Sciatic nerve (tissue), 2 donors: ENCODE measurements at regions of chr19 and their contacts with region 1.

Region 1: GRCh38 chr19:41206926-41207750 is 11.9 kb upstream of the AXL start:
- DNase-seq: peak; percentile 81
- ATAC-seq: peak; percentile 92

Region 2: GRCh38 chr19:41255171-41255570 is 48.0 kb after region 1 on chr19:
- intact Hi-C with region 1: loop called (anchors 5 kb)
- DNase-seq: no peak
- ATAC-seq: no peak

Region 3: GRCh38 chr19:41308392-41309179 is 101.4 kb after region 1 on chr19:
- intact Hi-C with region 1: loop called (anchors 5 kb)
- DNase-seq: peak; percentile 97
- ATAC-seq: peak; percentile 79